HEK293 (cell line): ENCODE measurements at regions of chr1 and their contacts with region 1.

Region 1: GRCh38 chr1:225977937-225978748 is 21.0 kb downstream of the SDE2 start:
- H3K4me3 ChIP-seq: no peak overlapping the region
- H3K27ac ChIP-seq: no peak overlapping the region
- H3K4me1 ChIP-seq: no peaks in the 10 kb centered on the region
- CTCF ChIP-seq: no peak

Region 2: DNA sequence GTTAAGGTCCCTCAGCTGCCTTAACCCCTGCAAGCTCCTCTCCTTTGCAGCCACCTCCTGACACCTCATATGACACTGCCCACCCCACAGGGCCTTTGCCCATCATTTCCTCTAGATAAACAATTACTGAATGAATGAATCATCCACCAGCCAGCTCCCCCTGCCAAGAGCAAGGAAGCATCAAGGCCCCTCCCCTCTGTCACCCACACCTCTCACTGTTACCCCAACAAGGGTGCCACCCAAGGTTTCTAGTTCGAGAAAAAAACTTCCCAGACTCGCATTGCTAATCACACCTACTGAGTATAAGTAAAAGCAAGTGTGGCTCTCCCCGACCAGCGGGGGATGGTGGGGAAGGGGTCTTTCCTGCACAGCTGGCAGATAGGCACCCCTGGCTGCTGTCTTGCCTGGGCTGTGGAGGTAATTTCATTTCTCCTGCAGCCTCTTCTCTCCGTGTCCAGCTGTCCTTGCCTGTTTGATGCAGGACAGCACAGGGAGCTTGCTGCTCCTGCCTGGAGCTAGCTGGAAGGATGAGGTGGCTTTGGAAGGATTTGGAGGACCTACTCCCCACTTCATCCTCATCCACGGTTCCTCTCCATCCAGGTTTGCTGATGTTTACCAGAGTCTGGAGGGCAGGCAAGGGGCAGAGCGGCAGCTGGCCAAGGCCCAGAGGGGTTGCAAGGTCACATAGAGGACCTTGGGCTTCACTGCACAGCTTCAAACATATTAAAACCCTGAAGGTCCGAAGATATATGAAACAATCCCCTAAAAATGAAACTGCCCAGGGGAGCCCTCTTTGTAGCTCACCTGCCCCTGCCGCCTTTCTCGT is 517.2 kb before region 1 on chr1:
- CTCF ChIA-PET with region 1: interaction called, 10 read pairs
- POLR2A ChIA-PET with region 1: no interaction called
- H3K4me3 ChIP-seq: no peak overlapping the region
- H3K27ac ChIP-seq: no peak overlapping the region
- H3K4me1 ChIP-seq: peaks cover 28% of the 10 kb centered on the region
- CTCF ChIP-seq: no peak

Region 3: GRCh38 chr1:225467193-225468020 is 510.7 kb before region 1 on chr1:
- CTCF ChIA-PET with region 1: interaction called, 22 read pairs
- POLR2A ChIA-PET with region 1: no interaction called
- H3K4me3 ChIP-seq: no peak overlapping the region
- H3K27ac ChIP-seq: no peak overlapping the region
- H3K4me1 ChIP-seq: peaks cover 21% of the 10 kb centered on the region
- CTCF ChIP-seq: no peak